ENCODE measurements at regions of chr5 and their contacts with region 1.

Region 1: DNA sequence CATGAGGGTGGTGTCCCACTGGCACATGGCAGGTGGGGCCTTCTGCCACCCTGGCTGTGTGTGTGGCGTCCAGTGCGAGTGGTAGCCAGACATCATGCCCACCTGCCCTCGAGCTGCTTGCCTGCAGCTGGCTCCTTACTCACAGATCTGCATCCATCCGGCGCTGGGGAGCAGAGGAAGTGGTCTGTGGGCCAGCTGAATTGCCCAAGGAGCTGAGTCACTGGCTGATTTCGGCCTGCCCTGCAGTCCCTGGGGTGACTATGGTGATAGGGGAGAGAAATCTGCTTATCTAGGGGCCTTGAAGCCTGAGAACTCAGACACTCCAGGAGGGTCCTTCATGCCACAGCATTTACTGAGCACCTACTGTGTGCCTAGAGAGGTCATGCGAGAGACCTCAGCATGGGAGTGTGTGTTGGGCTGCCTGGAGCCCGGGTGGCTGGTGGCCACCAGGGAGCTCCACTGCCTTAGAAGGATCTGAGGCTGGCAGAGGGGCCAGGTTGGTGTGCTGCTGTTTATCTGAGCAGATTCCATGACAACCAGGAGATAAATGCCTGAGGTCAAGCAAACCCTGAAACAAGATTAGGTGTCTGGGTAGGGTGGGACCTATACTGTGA is 57.1 kb downstream of the SLC22A5 start:
- DNase-seq: peak; percentile 41
- ATAC-seq: peak; percentile 85
- H3K4me3 Mint-ChIP-seq: no peak overlapping the region
- H3K27ac Mint-ChIP-seq: no peak overlapping the region
- H3K4me1 Mint-ChIP-seq: peaks cover 18% of the 10 kb centered on the region
- H3K27me3 Mint-ChIP-seq: no peaks in the 10 kb centered on the region
- CTCF ChIP-seq: no peak

Region 2: GRCh38 chr5:132301344-132302271 is 125.0 kb before region 1 on chr5:
- CTCF ChIA-PET with region 1: no interaction called
- POLR2A ChIA-PET with region 1: no interaction called
- DNase-seq: no peak
- ATAC-seq: no peak
- H3K4me3 Mint-ChIP-seq: no peak overlapping the region
- H3K27ac Mint-ChIP-seq: no peak overlapping the region
- H3K4me1 Mint-ChIP-seq: peaks cover 8% of the 10 kb centered on the region; the same call in 1 of the 2 replicates
- H3K27me3 Mint-ChIP-seq: peaks cover 7% of the 10 kb centered on the region
- CTCF ChIP-seq: no peak

Region 3: DNA sequence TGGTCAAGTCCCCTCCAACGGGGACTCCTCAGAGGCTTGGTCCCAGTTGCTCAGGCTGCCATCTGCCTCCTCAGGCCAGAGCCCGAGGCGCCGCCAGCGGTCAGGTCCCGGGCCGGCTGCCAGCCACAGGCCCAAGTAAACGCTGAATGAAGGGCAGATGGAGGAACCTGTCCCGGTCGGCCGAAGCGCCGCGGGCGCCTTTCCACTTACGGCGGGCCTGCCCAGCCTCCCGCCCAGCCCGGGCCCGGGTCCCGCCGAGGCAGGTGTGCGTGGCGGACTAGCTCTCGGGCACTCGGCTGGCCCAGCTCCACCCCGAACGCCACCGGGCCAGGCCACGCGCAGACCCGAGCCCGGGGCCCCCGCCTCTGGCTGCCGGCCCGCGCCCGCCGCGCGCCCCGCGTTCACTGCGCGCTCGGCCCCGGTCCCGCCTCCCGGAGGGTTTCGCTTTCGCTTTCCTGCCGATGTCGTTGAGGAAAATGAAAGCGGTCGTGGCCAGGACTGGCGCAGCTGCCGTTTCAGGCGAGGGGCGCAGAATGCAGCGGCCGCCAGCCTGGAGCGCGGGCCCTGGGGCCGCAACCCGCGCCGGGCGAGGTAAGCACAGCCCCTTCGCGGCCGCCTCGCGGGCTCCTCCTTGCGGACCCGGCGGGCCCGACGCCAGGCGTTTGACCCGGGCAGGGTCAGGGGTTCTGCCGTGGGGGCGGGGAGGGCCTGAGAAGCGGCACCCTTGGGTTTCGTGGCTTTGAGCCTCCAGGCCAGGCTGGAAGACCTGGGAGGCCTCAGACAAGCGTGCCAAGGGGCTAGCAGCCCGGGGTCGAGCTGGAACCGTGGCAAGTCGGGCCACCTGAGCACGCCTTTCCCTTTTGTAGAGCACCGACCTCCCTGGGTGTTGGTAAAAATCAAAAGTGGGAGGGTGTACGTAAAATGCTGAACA is 15.9 kb before region 1 on chr5:
- CTCF ChIA-PET with region 1: interaction called, 10 read pairs
- POLR2A ChIA-PET with region 1: no interaction called
- DNase-seq: peak; percentile 88
- ATAC-seq: peak; percentile 98
- H3K4me3 Mint-ChIP-seq: peak overlapping the region; percentile 70
- H3K27ac Mint-ChIP-seq: peak overlapping the region; percentile 44
- H3K4me1 Mint-ChIP-seq: peaks cover 8% of the 10 kb centered on the region
- H3K27me3 Mint-ChIP-seq: peaks cover 5% of the 10 kb centered on the region
- CTCF ChIP-seq: peak; percentile 56

Measured in WTC11 (cell line).